H1 (cell line): ENCODE measurements at regions of chr15 and their contacts with region 1.

Region 1: GRCh38 chr15:82108489-82109078 is 62.8 kb upstream of the MEX3B start:
- DNase-seq: peak; percentile 29 to 99
- H3K4me3 ChIP-seq: no peak overlapping the region
- H3K27ac ChIP-seq: no peak overlapping the region
- H3K4me1 ChIP-seq: no peaks in the 10 kb centered on the region; a peak in 1 of 7 replicates
- H3K27me3 ChIP-seq: no peaks in the 10 kb centered on the region
- CTCF ChIP-seq: peak; percentile 88 to 93 (median 91)
- EP300 ChIP-seq: no peak
- POLR2A ChIP-seq: no peak
- RAD21 ChIP-seq: peak; percentile 85 to 89

Region 2: DNA sequence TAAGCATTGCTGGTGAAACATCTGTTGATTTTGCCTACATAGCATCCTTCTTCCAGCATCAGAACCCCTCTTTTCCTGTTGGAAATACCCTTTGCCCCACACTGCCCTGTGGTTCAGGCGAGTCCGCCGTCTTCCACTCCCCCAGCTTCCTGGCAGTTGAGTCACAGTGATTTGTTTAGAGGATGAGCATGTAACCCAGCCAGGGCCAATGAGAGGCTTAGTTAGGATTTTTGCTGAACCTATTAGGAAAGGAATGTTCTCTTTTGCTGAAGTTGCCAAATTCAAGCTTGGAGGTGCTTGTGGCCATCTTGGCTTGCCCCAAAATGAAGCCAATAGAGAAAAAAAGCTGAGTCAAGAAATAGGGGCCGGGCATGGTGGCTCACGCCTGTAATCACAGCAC is 43.8 kb before region 1 on chr15:
- CTCF ChIA-PET with region 1: interaction called, 15 read pairs
- POLR2A ChIA-PET with region 1: no interaction called
- DNase-seq: no peak
- H3K4me3 ChIP-seq: no peak overlapping the region
- H3K27ac ChIP-seq: no peak overlapping the region
- H3K4me1 ChIP-seq: peaks cover 2 to 5% (median 3%) of the 10 kb centered on the region in 4 experiments; a peak in 4 of 7 replicates
- H3K27me3 ChIP-seq: peaks cover 2 to 27% (median 22%) of the 10 kb centered on the region in 4 experiments
- CTCF ChIP-seq: no peak
- EP300 ChIP-seq: no peak
- POLR2A ChIP-seq: no peak
- RAD21 ChIP-seq: no peak

Region 3: GRCh38 chr15:82081914-82082762 is 26.4 kb before region 1 on chr15:
- CTCF ChIA-PET with region 1: interaction called, 27 read pairs
- POLR2A ChIA-PET with region 1: no interaction called
- DNase-seq: peak in 1 of 2 experiments; percentile 67
- H3K4me3 ChIP-seq: no peak overlapping the region
- H3K27ac ChIP-seq: no peak overlapping the region
- H3K4me1 ChIP-seq: peaks cover 0 to 2% (median 0%) of the 10 kb centered on the region in 4 experiments; a peak in 1 of 7 replicates
- H3K27me3 ChIP-seq: no peaks in the 10 kb centered on the region
- CTCF ChIP-seq: peak in 2 of 3 experiments; percentile 66 to 74; a peak in 3 of 4 replicates
- EP300 ChIP-seq: no peak
- POLR2A ChIP-seq: no peak
- RAD21 ChIP-seq: peak; percentile 80 to 87

Region 4: GRCh38 chr15:82093774-82094211 is 14.8 kb before region 1 on chr15:
- CTCF ChIA-PET with region 1: interaction called, 12 read pairs
- POLR2A ChIA-PET with region 1: no interaction called
- DNase-seq: no peak
- H3K4me3 ChIP-seq: no peak overlapping the region
- H3K27ac ChIP-seq: no peak overlapping the region
- H3K4me1 ChIP-seq: no peaks in the 10 kb centered on the region; a peak in 1 of 7 replicates
- H3K27me3 ChIP-seq: no peaks in the 10 kb centered on the region; a peak in 1 of 7 replicates
- CTCF ChIP-seq: no peak
- EP300 ChIP-seq: no peak
- POLR2A ChIP-seq: no peak
- RAD21 ChIP-seq: no peak

Region 5: GRCh38 chr15:82122746-82123400 is 14.3 kb after region 1 on chr15:
- CTCF ChIA-PET with region 1: interaction called, 70 read pairs
- POLR2A ChIA-PET with region 1: interaction called, 5 read pairs
- DNase-seq: peak in 1 of 2 experiments; percentile 19
- H3K4me3 ChIP-seq: no peak overlapping the region
- H3K27ac ChIP-seq: no peak overlapping the region
- H3K4me1 ChIP-seq: no peaks in the 10 kb centered on the region
- H3K27me3 ChIP-seq: no peaks in the 10 kb centered on the region
- CTCF ChIP-seq: no peak
- EP300 ChIP-seq: no peak
- POLR2A ChIP-seq: no peak
- RAD21 ChIP-seq: no peak

Region 6: GRCh38 chr15:82139823-82140268 is 31.3 kb after region 1 on chr15:
- CTCF ChIA-PET with region 1: interaction called, 13 read pairs
- POLR2A ChIA-PET with region 1: no interaction called
- DNase-seq: no peak
- H3K4me3 ChIP-seq: no peak overlapping the region
- H3K27ac ChIP-seq: no peak overlapping the region; the same call in 1 of the 2 replicates
- H3K4me1 ChIP-seq: no peaks in the 10 kb centered on the region
- H3K27me3 ChIP-seq: no peaks in the 10 kb centered on the region
- CTCF ChIP-seq: peak in 2 of 3 experiments; percentile 55 to 58; a peak in 2 of 4 replicates
- EP300 ChIP-seq: no peak
- POLR2A ChIP-seq: no peak
- RAD21 ChIP-seq: peak; percentile 38 to 50; a peak in 3 of 4 replicates